ENCODE measurements at regions of chr13 and their contacts with region 1.

Region 1: GRCh38 chr13:40613192-40613818 is 53.1 kb downstream of the FOXO1 start:
- DNase-seq: peak; percentile 45
- H3K4me3 Mint-ChIP-seq: peak overlapping the region; percentile 78
- H3K27ac Mint-ChIP-seq: peak overlapping the region; percentile 91
- H3K4me1 Mint-ChIP-seq: peaks cover 78% of the 10 kb centered on the region
- H3K27me3 Mint-ChIP-seq: no peaks in the 10 kb centered on the region

Region 2: GRCh38 chr13:40318366-40318765 is 294.9 kb before region 1 on chr13:
- intact Hi-C with region 1: loop called (anchors 5 kb)
- DNase-seq: no peak
- H3K4me3 Mint-ChIP-seq: no peak overlapping the region
- H3K27ac Mint-ChIP-seq: no peak overlapping the region
- H3K4me1 Mint-ChIP-seq: peaks cover 70% of the 10 kb centered on the region
- H3K27me3 Mint-ChIP-seq: no peaks in the 10 kb centered on the region

Region 3: DNA sequence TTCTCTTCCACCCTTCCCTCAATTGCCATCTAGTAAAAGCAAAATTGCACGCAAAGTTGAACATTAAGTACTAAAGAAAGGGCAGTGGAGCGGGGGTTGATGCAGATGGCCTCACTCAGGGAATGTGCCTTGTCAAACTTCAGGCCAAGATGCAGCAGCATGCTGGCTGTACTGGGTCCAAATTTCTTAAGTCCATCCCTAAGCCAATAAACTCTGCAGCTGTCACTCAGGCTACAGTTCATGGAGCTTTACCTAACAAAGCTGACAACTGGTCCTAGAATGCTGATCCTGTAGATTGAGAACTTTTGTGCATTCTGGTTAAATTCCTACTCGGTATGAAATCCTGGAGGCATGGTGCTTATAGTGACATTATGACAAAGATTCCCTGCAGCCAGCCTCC is 35.2 kb before region 1 on chr13:
- intact Hi-C with region 1: loop called (anchors 5 kb)
- DNase-seq: no peak
- H3K4me3 Mint-ChIP-seq: no peak overlapping the region
- H3K27ac Mint-ChIP-seq: no peak overlapping the region
- H3K4me1 Mint-ChIP-seq: peaks cover 89% of the 10 kb centered on the region
- H3K27me3 Mint-ChIP-seq: no peaks in the 10 kb centered on the region

Region 4: GRCh38 chr13:40597740-40598370 is 15.4 kb before region 1 on chr13:
- intact Hi-C with region 1: loop called (anchors 1 kb)
- DNase-seq: no peak
- H3K4me3 Mint-ChIP-seq: peak overlapping the region; percentile 6
- H3K27ac Mint-ChIP-seq: peak overlapping the region; percentile 10
- H3K4me1 Mint-ChIP-seq: peaks cover 75% of the 10 kb centered on the region
- H3K27me3 Mint-ChIP-seq: no peaks in the 10 kb centered on the region

Region 5: GRCh38 chr13:40629678-40630384 is 16.5 kb after region 1 on chr13:
- intact Hi-C with region 1: loop called (anchors 2 kb)
- DNase-seq: no peak
- H3K4me3 Mint-ChIP-seq: peak overlapping the region; percentile 11
- H3K27ac Mint-ChIP-seq: peak overlapping the region; percentile 47
- H3K4me1 Mint-ChIP-seq: peaks cover 78% of the 10 kb centered on the region
- H3K27me3 Mint-ChIP-seq: no peaks in the 10 kb centered on the region

Region 6: DNA sequence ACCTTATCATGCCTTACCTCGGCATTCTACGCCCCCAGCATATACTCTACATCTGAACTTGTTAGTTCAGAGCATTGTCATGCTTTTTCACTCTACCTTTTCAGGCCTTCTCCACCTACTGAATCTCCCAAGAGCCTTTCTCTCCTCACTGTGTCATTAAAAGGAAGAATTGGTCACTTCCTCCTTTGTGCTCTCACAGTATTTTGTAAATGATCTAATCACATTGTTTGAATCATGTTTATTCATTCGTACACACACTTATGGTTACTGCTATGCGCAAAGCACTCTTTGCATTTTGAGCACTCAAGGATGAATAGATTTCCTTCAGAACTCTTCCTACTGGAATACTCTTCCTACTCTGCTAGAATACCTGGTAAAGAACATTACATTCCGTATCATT is 421.6 kb after region 1 on chr13:
- intact Hi-C with region 1: no loop called
- DNase-seq: no peak
- H3K4me3 Mint-ChIP-seq: no peak overlapping the region
- H3K27ac Mint-ChIP-seq: no peak overlapping the region
- H3K4me1 Mint-ChIP-seq: peaks cover 12% of the 10 kb centered on the region
- H3K27me3 Mint-ChIP-seq: no peaks in the 10 kb centered on the region

Region 7: DNA sequence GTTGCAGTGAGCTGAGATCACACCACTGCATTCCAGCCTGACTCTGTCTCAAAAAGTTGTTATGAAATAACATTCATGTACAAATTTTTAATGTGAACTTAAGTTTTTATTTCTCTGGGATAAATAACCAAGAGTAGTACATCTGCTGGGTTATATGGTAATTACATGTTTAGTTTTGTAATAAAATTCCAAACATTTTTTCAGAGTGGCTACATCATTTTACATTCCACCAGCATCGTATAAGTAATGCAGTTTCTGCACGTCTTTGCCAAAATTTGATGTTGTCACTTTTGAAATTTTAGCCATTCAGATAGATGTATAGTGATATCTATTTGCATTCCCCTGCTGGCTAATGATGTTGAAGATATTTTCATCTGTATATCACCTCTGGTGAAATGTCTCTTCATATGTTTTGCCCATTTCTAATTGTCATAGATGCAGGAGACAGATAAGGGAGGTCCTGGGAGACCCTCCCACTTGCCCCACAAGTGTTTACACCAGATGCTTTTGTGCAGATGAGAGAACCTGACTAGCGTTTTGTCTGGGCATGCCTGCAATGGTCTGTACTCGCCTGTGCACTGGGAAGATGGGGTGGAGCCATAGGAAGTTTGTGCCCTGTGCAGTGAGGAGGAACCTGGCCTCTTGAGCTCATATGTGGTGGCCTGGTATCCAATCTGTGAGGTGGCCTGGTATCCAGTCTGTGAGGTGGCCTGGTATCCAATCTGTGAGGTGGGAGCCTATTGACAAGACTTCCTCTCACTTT is 532.0 kb after region 1 on chr13:
- intact Hi-C with region 1: no loop called
- DNase-seq: no peak
- H3K4me3 Mint-ChIP-seq: no peak overlapping the region
- H3K27ac Mint-ChIP-seq: no peak overlapping the region
- H3K4me1 Mint-ChIP-seq: no peaks in the 10 kb centered on the region
- H3K27me3 Mint-ChIP-seq: no peaks in the 10 kb centered on the region